ENCODE measurements at regions of chr10 and their contacts with region 1.

Region 1: DNA sequence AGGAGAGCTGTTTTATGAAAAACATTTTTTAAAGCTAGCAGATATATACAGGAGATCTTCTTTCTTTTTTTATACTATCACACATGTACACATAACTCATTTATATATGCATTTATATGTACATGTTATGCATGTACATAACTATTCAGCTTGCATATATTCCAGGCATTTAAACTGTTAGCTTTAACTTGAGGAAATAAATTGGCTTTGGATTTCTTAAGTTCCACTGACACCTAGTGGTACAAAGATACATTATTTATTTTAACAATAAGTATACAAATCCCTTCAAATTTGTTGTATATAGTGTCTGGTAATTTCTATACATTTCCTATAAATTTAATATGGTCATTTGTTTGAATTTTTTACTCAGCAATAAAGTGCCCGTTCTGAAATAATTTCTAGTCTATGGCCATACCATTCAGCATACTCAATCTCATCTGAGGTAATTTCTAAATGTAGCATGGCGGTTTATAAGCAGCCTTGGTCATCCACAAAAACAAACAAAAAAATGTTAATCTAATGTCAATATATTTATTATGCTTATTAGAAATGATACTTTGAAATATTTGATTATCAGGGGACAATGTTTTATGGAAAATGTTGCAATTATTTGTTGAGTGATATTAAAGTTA is 11.6 kb downstream of the ZDHHC6 start:
- DNase-seq: no peak
- H3K4me3 ChIP-seq: no peak overlapping the region
- CTCF ChIP-seq: peak; percentile 11

Region 2: GRCh38 chr10:112327678-112328077 is 107.4 kb before region 1 on chr10:
- CTCF ChIA-PET with region 1: interaction called, 25 read pairs
- POLR2A ChIA-PET with region 1: no interaction called
- DNase-seq: no peak
- H3K4me3 ChIP-seq: no peak overlapping the region
- CTCF ChIP-seq: no peak

Region 3: DNA sequence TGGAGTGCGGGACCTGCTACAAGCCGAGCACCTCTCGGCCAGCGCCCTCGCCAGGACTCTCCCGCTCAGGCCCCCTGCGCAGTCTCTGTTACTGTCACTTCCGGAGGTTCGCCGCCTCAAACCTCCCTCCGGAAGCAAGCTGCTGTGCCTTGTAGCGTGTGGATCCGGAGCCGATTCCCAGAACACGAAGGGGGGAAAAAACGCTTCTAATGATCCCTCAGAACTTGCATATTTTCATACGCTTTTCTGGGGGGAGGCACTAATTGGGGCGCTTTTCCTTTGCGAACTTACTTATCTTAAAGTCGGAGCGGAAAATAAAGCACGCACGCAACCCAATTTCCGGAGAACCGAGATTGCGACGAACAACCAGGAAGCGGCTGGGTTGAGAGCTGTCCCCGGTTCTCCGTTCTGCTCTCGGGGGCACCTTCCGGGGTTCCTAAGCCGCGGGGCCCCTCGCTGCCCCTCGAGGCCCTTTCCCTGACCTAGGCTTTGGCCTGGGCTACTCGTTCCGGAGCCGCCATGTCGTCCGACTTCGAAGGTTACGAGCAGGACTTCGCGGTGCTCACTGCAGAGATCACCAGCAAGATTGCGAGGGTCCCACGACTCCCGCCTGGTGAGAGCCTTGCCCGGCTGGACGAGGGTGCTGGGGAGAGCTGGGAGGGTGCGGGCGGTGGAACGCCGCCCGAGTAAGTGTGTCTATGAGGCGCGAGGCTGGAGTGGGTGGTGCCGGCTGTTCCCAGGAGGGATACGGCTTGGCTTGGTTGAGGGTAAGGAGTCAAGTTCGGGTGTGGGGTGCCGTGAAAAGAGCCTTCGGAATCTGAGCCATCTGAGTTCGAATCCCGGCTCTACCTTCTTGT is 12.0 kb after region 1 on chr10 and contains the starts of genes VTI1A and ZDHHC6:
- CTCF ChIA-PET with region 1: interaction called, 12 read pairs
- POLR2A ChIA-PET with region 1: interaction called, 5 read pairs
- DNase-seq: no peak
- H3K4me3 ChIP-seq: peak within 1 kb of the TSS; percentile 94
- CTCF ChIP-seq: peak; percentile 46